Left ventricle myocardium inferior (tissue), 1 donor: ENCODE measurements at regions of chr12 and their contacts with region 1.

Region 1: DNA sequence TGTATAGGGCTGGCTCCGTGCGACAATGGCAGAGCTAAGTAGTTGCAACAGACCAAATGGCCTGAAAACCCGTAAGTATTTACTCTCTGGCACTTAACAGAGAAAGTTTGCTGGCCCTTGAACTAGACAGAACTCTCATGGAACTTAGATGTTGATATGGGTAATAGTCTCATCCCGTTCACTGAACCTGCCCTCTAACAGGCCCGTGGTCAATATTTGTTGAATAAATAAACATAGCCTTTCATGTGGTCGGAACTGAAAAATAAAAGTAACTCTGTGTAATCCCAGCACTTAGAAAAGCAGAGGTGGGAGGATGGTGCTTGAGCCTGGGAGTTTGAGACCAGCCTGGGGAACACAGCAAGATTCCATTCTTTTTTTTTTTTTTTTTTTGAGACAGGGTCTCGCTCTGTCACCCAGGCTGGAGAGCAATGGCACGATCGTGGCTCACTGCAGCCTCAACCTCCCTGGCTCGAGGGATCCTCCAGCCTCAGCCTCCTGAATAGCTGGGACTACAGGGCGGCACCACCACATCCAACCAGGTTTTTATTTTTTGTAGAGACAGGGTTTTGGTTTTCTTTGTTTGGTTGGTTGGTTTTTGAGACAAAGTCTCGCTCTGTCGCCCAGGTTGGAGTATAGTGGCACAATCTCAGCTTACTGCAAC is 29.7 kb downstream of the KDM2B start:
- DNase-seq: no peak
- H3K4me3 ChIP-seq: no peak overlapping the region
- H3K27ac ChIP-seq: no peak overlapping the region
- H3K4me1 ChIP-seq: peaks cover 5% of the 10 kb centered on the region
- H3K27me3 ChIP-seq: no peaks in the 10 kb centered on the region
- CTCF ChIP-seq: no peak

Region 2: DNA sequence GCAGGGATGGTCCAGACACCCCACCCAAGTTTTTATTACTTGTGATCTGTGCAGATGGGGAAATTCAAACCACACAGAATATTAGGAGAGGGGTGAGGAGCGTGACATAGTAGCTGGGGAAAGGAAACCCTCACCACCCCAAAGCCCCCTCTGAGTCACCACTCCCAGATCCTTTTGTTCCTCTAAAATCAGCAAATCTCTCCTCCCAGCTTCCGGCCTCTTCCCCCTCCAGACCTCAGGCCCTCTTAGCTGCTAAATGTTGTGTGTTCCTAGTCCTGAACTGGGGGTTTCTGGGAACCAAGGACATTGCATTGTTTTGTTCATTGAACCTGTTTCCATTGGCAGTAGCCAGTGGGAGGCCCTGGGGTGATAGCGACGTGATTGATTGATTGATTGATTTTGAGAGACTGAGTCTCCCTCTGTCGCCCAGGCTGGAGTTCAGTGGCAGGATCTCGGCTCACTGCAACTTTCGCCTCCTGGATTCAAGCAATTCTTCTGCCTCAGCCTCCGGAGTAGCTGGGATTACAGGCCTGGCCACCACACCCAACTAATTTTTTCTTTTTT is 69.3 kb after region 1 on chr12:
- intact Hi-C with region 1: loop called (anchors 5 kb)
- DNase-seq: no peak
- H3K4me3 ChIP-seq: no peak overlapping the region
- H3K27ac ChIP-seq: no peak overlapping the region
- H3K4me1 ChIP-seq: peaks cover 6% of the 10 kb centered on the region
- H3K27me3 ChIP-seq: no peaks in the 10 kb centered on the region
- CTCF ChIP-seq: no peak

Region 3: DNA sequence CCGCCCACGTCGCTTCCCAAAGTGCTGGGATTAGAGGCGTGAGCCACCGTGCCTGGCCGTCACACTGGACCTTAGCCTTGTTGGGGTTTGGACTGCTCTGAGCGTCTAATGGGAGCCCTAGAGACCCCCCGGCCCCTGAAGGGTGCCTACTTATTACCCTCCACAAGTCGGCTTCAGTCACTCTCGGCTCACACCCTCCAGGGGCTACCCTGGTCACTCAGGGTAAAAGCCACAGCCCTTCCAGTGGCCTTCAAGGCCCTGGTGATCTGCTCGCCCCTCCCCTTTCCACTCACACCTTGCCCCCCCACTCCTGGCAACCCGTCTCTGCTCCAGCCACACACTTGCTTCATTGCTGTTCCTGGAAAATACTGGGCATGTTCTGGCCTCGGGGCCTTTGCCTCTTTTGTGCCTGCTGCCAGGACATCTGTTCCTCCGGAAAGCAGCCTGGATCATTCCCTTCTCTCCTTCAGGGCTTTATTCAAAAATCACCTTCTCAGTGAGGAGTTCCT is 122.0 kb after region 1 on chr12:
- intact Hi-C with region 1: loop called (anchors 5 kb)
- DNase-seq: no peak
- H3K4me3 ChIP-seq: peak overlapping the region; percentile 69
- H3K27ac ChIP-seq: peak overlapping the region; percentile 4
- H3K4me1 ChIP-seq: peaks cover 8% of the 10 kb centered on the region
- H3K27me3 ChIP-seq: peaks cover 4% of the 10 kb centered on the region
- CTCF ChIP-seq: no peak